WTC11 (cell line): ENCODE measurements at regions of chr3 and their contacts with region 1.

Region 1: DNA sequence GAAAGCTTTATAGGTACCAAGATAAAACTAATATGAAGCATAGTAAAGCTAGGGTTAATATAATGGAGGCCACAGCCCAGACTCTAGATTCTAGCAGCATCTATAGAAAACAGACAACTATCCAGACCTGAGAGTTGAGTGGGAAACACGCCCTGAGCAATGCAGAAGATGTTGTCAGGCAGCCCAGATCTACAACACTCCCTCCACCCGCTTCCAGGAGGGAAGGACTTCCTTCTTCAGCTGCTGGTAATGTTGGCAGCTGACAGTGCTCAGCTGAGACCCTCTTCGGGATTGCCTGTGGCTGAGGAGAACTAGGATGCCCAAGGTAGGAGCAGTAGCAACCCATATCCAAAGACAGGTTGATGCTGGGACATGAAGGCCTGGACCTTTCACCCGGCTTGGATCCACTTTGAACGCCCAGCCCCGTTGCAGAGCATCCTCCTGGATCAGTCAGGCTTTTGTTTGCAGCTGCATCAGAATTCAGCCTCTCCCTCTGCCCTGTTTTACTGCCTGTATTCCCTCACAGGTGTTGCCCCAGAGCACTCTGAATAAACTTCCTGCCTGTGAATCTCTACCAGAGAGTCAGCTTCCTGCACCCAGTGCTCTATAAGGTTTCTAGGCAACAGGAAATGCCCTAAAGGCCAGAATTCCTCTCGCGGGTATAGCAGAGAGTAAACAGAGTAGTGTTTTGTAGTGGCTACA is 174.7 kb upstream of the IL12A start:
- DNase-seq: peak; percentile 19
- ATAC-seq: peak; percentile 96
- H3K4me3 Mint-ChIP-seq: no peak overlapping the region
- H3K27ac Mint-ChIP-seq: 0 out of 2 replicates have a peak overlapping the region, but pooled peaks have one; percentile 45
- H3K4me1 Mint-ChIP-seq: peaks cover 27% of the 10 kb centered on the region
- H3K27me3 Mint-ChIP-seq: no peaks in the 10 kb centered on the region
- CTCF ChIP-seq: no peak

Region 2: GRCh38 chr3:159775372-159775961 is 38.5 kb before region 1 on chr3:
- CTCF ChIA-PET with region 1: interaction called, 10 read pairs
- POLR2A ChIA-PET with region 1: interaction called, 4 read pairs
- DNase-seq: peak; percentile 44
- ATAC-seq: peak; percentile 99
- H3K4me3 Mint-ChIP-seq: no peak overlapping the region; the same call in 1 of the 2 replicates
- H3K27ac Mint-ChIP-seq: peak overlapping the region; percentile 89
- H3K4me1 Mint-ChIP-seq: peaks cover 22% of the 10 kb centered on the region
- H3K27me3 Mint-ChIP-seq: no peaks in the 10 kb centered on the region
- CTCF ChIP-seq: no peak

Region 3: DNA sequence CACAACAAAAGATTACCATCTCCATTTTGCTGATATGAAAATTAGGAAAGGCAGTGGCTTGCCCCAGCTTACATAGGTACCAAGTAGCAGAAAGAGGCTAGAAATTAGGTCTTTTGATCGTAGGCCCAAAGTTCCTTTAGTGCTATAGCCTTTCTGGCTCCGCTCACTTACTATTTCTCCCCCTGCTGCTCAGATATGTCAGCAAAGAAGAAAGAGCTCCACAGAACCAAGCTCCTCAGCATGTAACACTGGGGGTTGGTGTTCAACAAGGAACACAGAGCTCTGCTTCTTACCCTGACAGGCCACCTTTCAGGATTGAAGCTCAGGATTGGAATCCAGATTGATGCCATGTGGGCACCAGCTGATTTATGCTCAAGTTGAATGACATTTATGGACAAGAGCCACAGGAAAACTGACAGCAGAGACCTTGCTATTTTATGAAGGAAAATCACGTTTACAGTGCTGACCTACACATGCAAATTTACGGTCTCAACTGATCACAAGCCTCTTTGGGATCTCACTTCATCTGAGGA is 168.5 kb after region 1 on chr3:
- CTCF ChIA-PET with region 1: interaction called, 15 read pairs
- POLR2A ChIA-PET with region 1: no interaction called
- DNase-seq: no peak
- ATAC-seq: peak; percentile 90
- H3K4me3 Mint-ChIP-seq: no peak overlapping the region
- H3K27ac Mint-ChIP-seq: no peak overlapping the region
- H3K4me1 Mint-ChIP-seq: no peaks in the 10 kb centered on the region
- H3K27me3 Mint-ChIP-seq: peaks cover 3% of the 10 kb centered on the region
- CTCF ChIP-seq: no peak

Region 4: DNA sequence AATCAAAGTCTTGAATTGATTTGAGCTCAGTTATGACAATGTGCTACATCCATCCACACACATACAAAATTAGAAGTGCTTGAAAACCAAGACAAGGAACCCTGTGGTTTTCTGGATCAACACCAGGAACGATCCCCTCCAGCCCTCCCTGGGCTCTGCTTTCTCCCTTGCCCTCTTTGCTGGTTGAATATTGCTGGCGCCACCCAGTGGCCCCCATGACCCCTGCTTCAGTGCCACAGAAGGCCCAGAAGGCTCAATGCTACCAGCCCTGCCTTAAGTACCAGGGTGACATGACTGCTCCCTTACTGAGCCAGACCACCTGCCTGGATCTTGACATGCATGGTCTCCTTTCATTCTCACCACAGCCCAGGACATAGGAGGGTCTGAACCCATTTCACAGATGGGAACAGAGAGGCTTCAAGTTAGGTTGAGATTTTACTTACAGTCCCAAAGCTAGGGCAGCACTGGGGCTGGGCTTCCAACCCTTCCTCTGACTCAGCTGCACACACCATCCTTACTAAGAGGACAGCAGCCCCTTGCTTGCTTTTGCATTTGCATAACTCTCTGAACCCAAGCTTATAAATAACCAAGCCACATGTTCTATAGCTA is 189.7 kb after region 1 on chr3:
- CTCF ChIA-PET with region 1: interaction called, 39 read pairs
- POLR2A ChIA-PET with region 1: no interaction called
- DNase-seq: peak; percentile 78
- ATAC-seq: peak; percentile 97
- H3K4me3 Mint-ChIP-seq: no peak overlapping the region
- H3K27ac Mint-ChIP-seq: no peak overlapping the region
- H3K4me1 Mint-ChIP-seq: peaks cover 17% of the 10 kb centered on the region
- H3K27me3 Mint-ChIP-seq: no peaks in the 10 kb centered on the region
- CTCF ChIP-seq: peak; percentile 35; the same call in 1 of the 2 replicates